Ascending aorta (tissue), 2 donors: ENCODE measurements at regions of chr10 and their contacts with region 1.

Region 1: DNA sequence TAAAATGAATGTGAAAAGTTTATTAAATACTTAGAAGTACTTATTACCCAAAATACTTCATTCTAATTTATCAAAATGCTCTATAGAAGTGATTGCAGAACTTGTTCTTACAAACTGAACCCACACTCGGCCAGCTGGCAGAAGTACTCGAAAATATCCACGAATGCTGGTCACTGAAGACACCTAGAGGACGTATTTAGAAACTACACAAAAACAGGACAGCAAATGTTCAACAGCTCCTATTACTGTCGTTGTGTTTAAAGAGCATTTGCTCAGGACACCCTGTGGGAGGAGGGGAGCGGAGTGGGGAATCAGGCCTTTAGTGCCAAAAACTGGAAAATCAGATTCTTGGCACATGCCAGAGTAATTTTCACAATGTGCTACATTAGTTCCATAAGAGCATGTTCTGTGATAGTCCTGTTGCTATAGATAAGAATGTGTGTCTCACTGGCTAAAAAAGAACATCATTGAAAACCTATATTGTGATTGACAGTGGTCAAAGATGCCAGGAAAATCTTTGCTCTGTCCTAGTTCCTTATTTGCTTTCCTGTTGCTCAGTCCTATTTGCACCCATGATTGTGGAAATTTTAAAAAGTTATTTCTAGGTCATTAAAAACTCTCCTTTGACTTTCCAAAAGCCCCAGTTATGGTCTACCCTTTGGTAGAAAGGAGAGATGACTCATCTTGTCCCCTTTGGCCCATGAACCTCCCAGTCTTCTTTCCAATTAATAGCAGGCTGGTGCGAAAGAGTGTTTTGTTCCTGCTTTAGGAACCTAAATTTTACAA is 49.0 kb upstream of the NRBF2 start:
- DNase-seq: peak in 1 of 2 donors; percentile 71
- H3K4me3 ChIP-seq: no peak overlapping the region
- H3K27ac ChIP-seq: peak overlapping the region in 1 of 2 donors; percentile 6
- H3K4me1 ChIP-seq: peaks cover 0 to 8% of the 10 kb centered on the region in 2 donors
- H3K27me3 ChIP-seq: no peaks in the 10 kb centered on the region
- CTCF ChIP-seq: peak; percentile 51 to 73 (median 59)

Region 2: DNA sequence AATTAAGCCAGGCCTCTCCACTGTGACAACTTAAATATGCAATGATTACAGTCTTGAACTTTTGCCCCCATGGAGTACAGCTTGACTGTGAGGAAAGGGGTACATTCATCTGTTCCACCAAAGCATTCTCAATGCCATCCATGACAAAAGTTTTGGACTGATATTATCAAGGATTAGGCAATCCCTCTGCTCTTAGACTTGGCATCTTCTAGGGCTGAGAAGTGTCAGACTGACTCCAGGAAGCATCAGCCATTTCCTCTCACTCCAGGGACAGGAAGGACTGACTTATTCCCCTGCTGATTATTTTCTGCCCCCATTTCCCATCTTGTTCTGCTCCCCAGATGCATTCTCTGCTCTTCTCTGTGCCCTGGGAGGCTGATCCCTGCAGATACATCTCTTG is 640.2 kb before region 1 on chr10:
- intact Hi-C with region 1: loop called (anchors 5 kb)
- DNase-seq: no peak
- H3K4me3 ChIP-seq: no peak overlapping the region
- H3K27ac ChIP-seq: no peak overlapping the region
- H3K4me1 ChIP-seq: peaks cover 3 to 4% of the 10 kb centered on the region in 2 donors
- H3K27me3 ChIP-seq: no peaks in the 10 kb centered on the region
- CTCF ChIP-seq: no peak

Region 3: GRCh38 chr10:62594093-62594520 is 490.0 kb before region 1 on chr10:
- intact Hi-C with region 1: loop called (anchors 5 kb)
- DNase-seq: no peak
- H3K4me3 ChIP-seq: no peak overlapping the region
- H3K27ac ChIP-seq: no peak overlapping the region
- H3K4me1 ChIP-seq: no peaks in the 10 kb centered on the region
- H3K27me3 ChIP-seq: no peaks in the 10 kb centered on the region
- CTCF ChIP-seq: peak; percentile 72 to 80 (median 72)